ENCODE measurements at regions of chr12 and their contacts with region 1.

Region 1: GRCh38 chr12:751192-751998 is 984 bp upstream of the WNK1 start:
- DNase-seq: peak; percentile 61 to 95 (median 82)
- ATAC-seq: peak; percentile 21
- H3K4me3 ChIP-seq: peak overlapping the region; percentile 58 to 88
- H3K4me3 Mint-ChIP-seq: no peak overlapping the region
- H3K27ac ChIP-seq: peak overlapping the region; percentile 68 to 76
- H3K27ac Mint-ChIP-seq: no peak overlapping the region
- H3K4me1 ChIP-seq: peaks cover 25% of the 10 kb centered on the region
- H3K4me1 Mint-ChIP-seq: peaks cover 20% of the 10 kb centered on the region
- H3K27me3 ChIP-seq: no peaks in the 10 kb centered on the region
- H3K27me3 Mint-ChIP-seq: no peaks in the 10 kb centered on the region
- CTCF ChIP-seq: peak; percentile 48

Region 2: DNA sequence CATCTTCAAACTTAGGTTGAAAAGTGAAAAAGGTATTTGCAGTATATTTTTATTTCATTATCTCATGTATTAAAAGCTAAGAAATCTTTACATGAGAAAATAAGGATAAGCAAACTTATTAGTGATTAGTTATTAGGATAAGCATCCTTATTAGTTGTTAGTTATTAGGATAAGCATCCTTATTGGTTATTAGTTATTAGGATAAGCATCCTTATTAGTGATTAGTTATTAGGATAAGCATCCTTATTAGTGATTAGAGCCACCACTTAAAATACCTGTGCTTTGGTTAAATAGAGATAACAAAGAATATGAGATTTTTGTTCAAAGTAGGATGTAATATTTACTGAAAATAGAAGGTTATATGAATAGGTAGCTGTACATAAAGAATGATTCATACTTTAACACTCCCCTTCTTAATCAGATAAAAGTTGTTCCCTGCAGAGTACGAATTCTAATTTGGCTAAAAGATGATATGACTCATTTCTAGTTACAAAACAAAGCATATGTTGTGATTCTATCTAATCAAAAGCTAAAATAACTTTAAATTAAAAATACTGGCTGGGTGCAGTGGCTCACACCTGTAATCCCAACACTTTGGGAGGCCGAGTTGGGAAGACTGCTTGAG is 418.7 kb before region 1 on chr12:
- CTCF ChIA-PET with region 1: no interaction called
- POLR2A ChIA-PET with region 1: no interaction called
- intact Hi-C with region 1: no loop called
- DNase-seq: no peak
- ATAC-seq: no peak
- H3K4me3 ChIP-seq: no peak overlapping the region
- H3K4me3 Mint-ChIP-seq: no peak overlapping the region
- H3K27ac ChIP-seq: no peak overlapping the region
- H3K27ac Mint-ChIP-seq: no peak overlapping the region
- H3K4me1 ChIP-seq: no peaks in the 10 kb centered on the region
- H3K4me1 Mint-ChIP-seq: peaks cover 17% of the 10 kb centered on the region
- H3K27me3 ChIP-seq: no peaks in the 10 kb centered on the region
- H3K27me3 Mint-ChIP-seq: no peaks in the 10 kb centered on the region
- CTCF ChIP-seq: no peak

Region 3: GRCh38 chr12:575948-576612 is 175.3 kb before region 1 on chr12:
- CTCF ChIA-PET with region 1: interaction called, 43 read pairs
- POLR2A ChIA-PET with region 1: interaction called, 27 read pairs
- intact Hi-C with region 1: loop called (anchors 1 kb)
- DNase-seq: peak; percentile 73 to 95 (median 81)
- ATAC-seq: peak; percentile 98
- H3K4me3 ChIP-seq: peak overlapping the region; percentile 25 to 34
- H3K4me3 Mint-ChIP-seq: peak overlapping the region; percentile 69
- H3K27ac ChIP-seq: no peak overlapping the region
- H3K27ac Mint-ChIP-seq: peak overlapping the region; percentile 37
- H3K4me1 ChIP-seq: peaks cover 4% of the 10 kb centered on the region
- H3K4me1 Mint-ChIP-seq: peaks cover 14% of the 10 kb centered on the region
- H3K27me3 ChIP-seq: no peaks in the 10 kb centered on the region
- H3K27me3 Mint-ChIP-seq: no peaks in the 10 kb centered on the region
- CTCF ChIP-seq: peak; percentile 98

Region 4: DNA sequence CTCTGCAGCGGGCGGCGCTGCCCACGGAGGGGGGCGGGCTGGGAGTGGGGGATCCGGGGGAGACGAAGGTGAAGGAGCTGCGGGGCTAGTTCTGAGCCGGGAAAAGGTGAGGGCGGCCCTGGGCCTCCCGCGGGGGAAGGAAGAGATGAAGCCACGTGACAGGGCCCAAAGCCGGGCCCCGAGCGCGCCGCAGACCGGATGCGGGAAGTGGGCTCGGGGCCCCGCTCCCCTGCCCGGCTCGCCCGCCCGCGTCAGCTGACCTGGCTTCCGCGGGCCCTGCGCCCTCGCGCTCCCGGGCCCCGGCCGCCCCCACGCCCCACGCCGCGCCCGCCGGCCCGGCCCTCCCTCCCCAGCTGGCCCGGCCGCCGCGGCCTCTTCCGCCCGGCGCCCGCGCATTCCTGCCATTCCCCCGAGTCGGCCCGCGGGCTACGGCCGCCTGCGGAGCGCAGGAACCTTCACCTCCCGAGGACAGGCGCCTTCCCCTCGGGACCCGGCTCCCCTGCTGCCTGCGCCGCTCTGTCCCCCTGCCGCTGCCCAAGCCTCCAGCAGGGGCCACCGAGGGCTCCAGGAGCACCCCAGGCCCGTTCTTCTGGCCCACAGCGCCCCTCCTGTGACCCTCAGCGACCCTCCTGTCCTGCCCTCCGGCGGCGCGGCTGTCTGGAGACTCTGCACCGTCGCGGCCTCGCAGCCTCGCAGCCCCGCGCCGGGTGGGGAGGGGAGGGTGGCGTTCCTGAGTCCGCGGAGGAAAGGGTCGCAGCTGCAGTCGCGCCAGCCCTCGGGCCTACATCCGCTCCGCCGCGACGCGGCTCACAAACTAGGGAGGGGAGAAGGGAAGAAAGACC is 108.5 kb before region 1 on chr12:
- CTCF ChIA-PET with region 1: interaction called, 14 read pairs
- POLR2A ChIA-PET with region 1: interaction called, 20 read pairs
- intact Hi-C with region 1: loop called (anchors 1 kb)
- DNase-seq: peak; percentile 39 to 91 (median 77)
- ATAC-seq: peak; percentile 75
- H3K4me3 ChIP-seq: peak overlapping the region; percentile 62 to 70
- H3K4me3 Mint-ChIP-seq: peak overlapping the region; percentile 89
- H3K27ac ChIP-seq: peak overlapping the region; percentile 72 to 88
- H3K27ac Mint-ChIP-seq: peak overlapping the region; percentile 97
- H3K4me1 ChIP-seq: peaks cover 36% of the 10 kb centered on the region
- H3K4me1 Mint-ChIP-seq: peaks cover 54% of the 10 kb centered on the region
- H3K27me3 ChIP-seq: no peaks in the 10 kb centered on the region
- H3K27me3 Mint-ChIP-seq: no peaks in the 10 kb centered on the region
- CTCF ChIP-seq: peak; percentile 34

Region 5: DNA sequence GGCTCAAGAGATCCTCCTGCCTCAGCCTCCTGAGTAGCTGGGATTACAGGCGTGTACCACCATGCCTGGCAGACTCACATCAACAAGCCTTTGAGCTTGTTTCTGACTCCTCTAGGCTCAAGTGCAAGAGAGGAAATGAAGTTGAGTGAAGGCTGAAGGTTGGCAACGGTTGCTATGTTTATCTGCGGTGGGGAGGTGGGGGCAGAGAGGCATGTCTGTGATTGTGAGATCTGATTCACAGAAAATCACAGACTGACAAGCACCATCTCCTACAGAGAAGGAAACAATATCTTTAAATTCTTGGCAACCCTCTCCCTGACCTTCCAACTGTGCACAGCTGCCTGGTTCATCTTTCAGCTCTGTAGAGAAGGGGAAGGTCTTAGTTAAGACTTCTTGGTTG is 66.0 kb before region 1 on chr12:
- CTCF ChIA-PET with region 1: interaction called, 27 read pairs
- POLR2A ChIA-PET with region 1: interaction called, 26 read pairs
- intact Hi-C with region 1: loop called (anchors 1 to 2 kb)
- DNase-seq: peak; percentile 69 to 97 (median 85)
- ATAC-seq: peak; percentile 89
- H3K4me3 ChIP-seq: no peak overlapping the region
- H3K4me3 Mint-ChIP-seq: peak overlapping the region; percentile 47
- H3K27ac ChIP-seq: peak overlapping the region; percentile 67 to 87
- H3K27ac Mint-ChIP-seq: peak overlapping the region; percentile 98
- H3K4me1 ChIP-seq: peaks cover 26% of the 10 kb centered on the region
- H3K4me1 Mint-ChIP-seq: peaks cover 50% of the 10 kb centered on the region
- H3K27me3 ChIP-seq: no peaks in the 10 kb centered on the region
- H3K27me3 Mint-ChIP-seq: no peaks in the 10 kb centered on the region
- CTCF ChIP-seq: no peak

Region 6: GRCh38 chr12:737122-737739 is 14.2 kb before region 1 on chr12:
- CTCF ChIA-PET with region 1: interaction called, 19 read pairs
- POLR2A ChIA-PET with region 1: interaction called, 10 read pairs
- intact Hi-C with region 1: no loop called
- DNase-seq: no peak
- ATAC-seq: no peak
- H3K4me3 ChIP-seq: no peak overlapping the region
- H3K4me3 Mint-ChIP-seq: no peak overlapping the region
- H3K27ac ChIP-seq: no peak overlapping the region
- H3K27ac Mint-ChIP-seq: no peak overlapping the region
- H3K4me1 ChIP-seq: no peaks in the 10 kb centered on the region
- H3K4me1 Mint-ChIP-seq: no peaks in the 10 kb centered on the region
- H3K27me3 ChIP-seq: no peaks in the 10 kb centered on the region
- H3K27me3 Mint-ChIP-seq: no peaks in the 10 kb centered on the region
- CTCF ChIP-seq: no peak

Region 7: DNA sequence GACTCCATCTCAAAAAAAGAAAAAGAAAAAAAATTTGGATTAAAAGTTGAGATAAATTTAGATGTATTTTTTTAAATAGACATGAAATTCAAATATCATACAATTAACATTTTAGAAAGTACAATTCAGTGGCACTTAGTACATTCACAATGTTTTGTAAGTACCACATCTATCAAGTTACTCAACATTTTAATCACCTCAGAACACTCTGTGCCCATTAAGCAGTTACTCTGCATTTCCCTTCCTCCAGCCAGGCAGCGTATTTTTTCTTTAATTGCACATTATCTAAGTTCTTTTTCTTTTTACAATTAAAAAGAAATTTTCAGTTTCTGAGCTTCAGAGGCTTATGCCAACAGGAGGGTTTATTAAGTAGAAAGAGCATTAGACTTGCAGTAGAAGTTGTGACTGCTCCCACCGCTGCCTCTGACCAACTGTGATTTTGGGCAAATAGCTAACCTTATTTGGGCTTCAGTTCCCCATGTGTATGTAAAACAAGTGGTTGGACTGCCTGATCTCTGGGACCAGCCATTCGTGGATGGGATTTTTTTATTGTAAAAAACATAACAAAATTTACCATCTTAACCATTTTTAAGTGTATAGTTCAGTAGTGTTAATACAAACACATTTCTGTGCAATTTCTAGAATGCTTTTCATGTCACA is 66.7 kb after region 1 on chr12:
- CTCF ChIA-PET with region 1: interaction called, 61 read pairs
- POLR2A ChIA-PET with region 1: interaction called, 7 read pairs
- intact Hi-C with region 1: loop called (anchors 1 to 2 kb)
- DNase-seq: no peak
- ATAC-seq: no peak
- H3K4me3 ChIP-seq: no peak overlapping the region
- H3K4me3 Mint-ChIP-seq: no peak overlapping the region
- H3K27ac ChIP-seq: no peak overlapping the region
- H3K27ac Mint-ChIP-seq: no peak overlapping the region
- H3K4me1 ChIP-seq: no peaks in the 10 kb centered on the region
- H3K4me1 Mint-ChIP-seq: peaks cover 56% of the 10 kb centered on the region
- H3K27me3 ChIP-seq: no peaks in the 10 kb centered on the region
- H3K27me3 Mint-ChIP-seq: no peaks in the 10 kb centered on the region
- CTCF ChIP-seq: no peak

Region 8: GRCh38 chr12:1162081-1162760 is 410.8 kb after region 1 on chr12:
- CTCF ChIA-PET with region 1: no interaction called
- POLR2A ChIA-PET with region 1: no interaction called
- intact Hi-C with region 1: no loop called
- DNase-seq: no peak
- ATAC-seq: no peak
- H3K4me3 ChIP-seq: no peak overlapping the region
- H3K4me3 Mint-ChIP-seq: no peak overlapping the region
- H3K27ac ChIP-seq: no peak overlapping the region
- H3K27ac Mint-ChIP-seq: no peak overlapping the region
- H3K4me1 ChIP-seq: no peaks in the 10 kb centered on the region
- H3K4me1 Mint-ChIP-seq: peaks cover 12% of the 10 kb centered on the region
- H3K27me3 ChIP-seq: no peaks in the 10 kb centered on the region
- H3K27me3 Mint-ChIP-seq: no peaks in the 10 kb centered on the region
- CTCF ChIP-seq: no peak